Right ventricle myocardium inferior (tissue), 1 donor: ENCODE measurements at regions of chr12 and their contacts with region 1.

Region 1: GRCh38 chr12:6873094-6874014 is at the start of gene SPSB2:
- DNase-seq: peak; percentile 99
- ATAC-seq: peak; percentile 95
- total RNA-seq, gene SPSB2: 3.0 TPM

Region 2: GRCh38 chr12:6890789-6891645 is 17.7 kb after region 1 on chr12:
- intact Hi-C with region 1: loop called (anchors 2 kb)
- DNase-seq: peak; percentile 99
- ATAC-seq: peak; percentile 97

Region 3: DNA sequence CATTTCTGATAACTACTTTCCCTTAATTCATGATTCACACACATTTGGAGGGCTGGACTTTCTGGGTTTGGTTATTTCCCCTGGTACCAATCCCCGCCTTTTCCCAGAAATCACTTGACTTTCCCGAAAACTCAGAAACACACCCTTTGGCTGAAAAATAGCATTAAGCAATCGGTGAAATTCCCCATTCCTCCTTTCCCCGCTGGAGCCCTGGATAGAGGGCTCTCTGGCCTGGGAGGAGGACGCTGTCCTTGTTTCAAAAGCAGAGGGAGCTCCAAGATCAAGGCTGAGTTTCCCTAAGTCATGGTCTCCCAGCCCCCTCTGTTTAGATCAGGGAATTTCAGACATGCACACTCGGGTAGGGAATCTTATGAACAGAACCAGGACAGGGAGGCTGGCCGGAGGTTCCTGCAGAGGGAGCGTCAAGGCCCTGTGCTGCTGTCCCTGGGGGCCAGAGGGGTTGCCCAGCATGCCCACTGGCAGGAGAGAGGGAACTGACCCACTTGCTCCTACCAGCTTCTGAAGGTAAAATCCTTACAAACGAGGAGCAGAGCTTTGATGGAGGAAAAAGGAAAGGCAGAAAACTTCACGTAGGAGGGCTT is 187.1 kb after region 1 on chr12 and contains the start of gene C1S:
- intact Hi-C with region 1: no loop called
- DNase-seq: no peak
- ATAC-seq: peak; percentile 98
- total RNA-seq, gene C1S: 153 TPM

Region 4: GRCh38 chr12:7108796-7109571 is 235.6 kb after region 1 on chr12 and contains the start of gene C1RL:
- intact Hi-C with region 1: loop called (anchors 10 kb)
- DNase-seq: peak; percentile 96
- ATAC-seq: peak; percentile 89
- total RNA-seq, gene C1RL: 14.4 TPM